Activated B cell treated with CpG ODN at 0.5 μM for 24 hours (primary cell): ENCODE measurements at regions of chr10 and their contacts with region 1.

Region 1: DNA sequence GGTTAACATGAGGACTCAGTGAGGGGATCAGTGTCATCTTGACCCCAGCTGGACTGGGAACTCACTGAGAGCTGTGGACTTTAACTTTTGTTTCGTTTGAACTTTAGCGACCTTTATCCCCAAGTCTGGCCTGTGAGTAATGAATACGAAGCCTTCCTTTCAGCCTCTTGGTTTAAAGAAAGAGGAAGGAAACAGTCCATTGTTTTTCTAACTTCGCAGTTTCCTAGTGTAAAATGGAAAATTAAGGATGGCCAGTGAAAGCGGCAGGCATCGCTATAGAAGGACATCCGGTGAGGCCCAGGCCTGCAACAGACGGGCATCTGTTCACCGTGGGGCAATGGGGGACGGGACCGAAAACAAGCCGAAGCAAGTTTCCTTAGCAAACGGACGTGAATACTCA is 44.1 kb upstream of the ADO start:
- DNase-seq: no peak
- ATAC-seq: no peak
- H3K4me3 Mint-ChIP-seq: no peak overlapping the region
- H3K27ac Mint-ChIP-seq: no peak overlapping the region
- H3K4me1 Mint-ChIP-seq: peaks cover 20% of the 10 kb centered on the region
- H3K27me3 Mint-ChIP-seq: peaks cover 3% of the 10 kb centered on the region
- CTCF ChIP-seq: no peak

Region 2: GRCh38 chr10:62742536-62743061 is 17.8 kb before region 1 on chr10:
- CTCF ChIA-PET with region 1: no interaction called
- POLR2A ChIA-PET with region 1: no interaction called
- intact Hi-C with region 1: loop called (anchors 2 kb)
- DNase-seq: no peak
- ATAC-seq: peak; percentile 85
- H3K4me3 Mint-ChIP-seq: peak overlapping the region; percentile 24
- H3K27ac Mint-ChIP-seq: peak overlapping the region; percentile 25
- H3K4me1 Mint-ChIP-seq: peaks cover 17% of the 10 kb centered on the region
- H3K27me3 Mint-ChIP-seq: no peaks in the 10 kb centered on the region
- CTCF ChIP-seq: no peak

Region 3: GRCh38 chr10:62907470-62908212 is 147.2 kb after region 1 on chr10:
- CTCF ChIA-PET with region 1: no interaction called
- POLR2A ChIA-PET with region 1: no interaction called
- intact Hi-C with region 1: loop called (anchors 5 kb)
- DNase-seq: no peak
- ATAC-seq: peak; percentile 66
- H3K4me3 Mint-ChIP-seq: no peak overlapping the region
- H3K27ac Mint-ChIP-seq: no peak overlapping the region
- H3K4me1 Mint-ChIP-seq: peaks cover 47% of the 10 kb centered on the region
- H3K27me3 Mint-ChIP-seq: no peaks in the 10 kb centered on the region
- CTCF ChIP-seq: no peak